AG04449 (cell line): ENCODE measurements at regions of chr7 and their contacts with region 1.

Region 1: DNA sequence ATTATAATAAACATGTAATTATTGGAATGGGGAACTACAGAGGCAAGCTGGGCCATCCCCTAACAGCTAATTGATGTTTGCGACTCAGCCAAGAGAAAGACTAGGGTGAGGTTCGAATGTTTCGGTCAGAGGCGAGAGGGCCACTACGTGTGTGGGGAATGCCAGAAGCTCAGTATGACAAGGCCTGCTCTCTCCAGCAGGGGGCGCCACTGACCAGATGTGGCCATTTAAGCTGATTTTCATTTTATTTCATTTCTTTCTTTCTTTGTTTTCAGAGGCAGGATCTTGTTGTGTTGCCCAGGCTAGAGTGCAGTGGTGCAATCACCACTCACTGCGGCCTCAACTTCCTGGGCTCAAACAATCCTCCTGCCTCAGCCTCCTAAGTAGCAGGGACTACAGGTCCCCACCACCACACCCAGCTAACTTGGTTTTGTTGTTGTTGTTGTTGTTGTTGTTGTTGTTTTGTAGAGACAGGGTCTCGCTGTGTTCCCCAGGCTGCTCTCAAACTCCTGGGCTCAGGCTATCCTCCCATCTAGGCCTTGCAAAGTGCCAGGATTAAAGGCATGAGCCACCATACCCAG is 38.1 kb downstream of the TMEM130 start:
- DNase-seq: no peak
- H3K4me3 ChIP-seq: no peak overlapping the region
- CTCF ChIP-seq: peak; percentile 70

Region 2: GRCh38 chr7:98821348-98821747 is 10.4 kb before region 1 on chr7:
- CTCF ChIA-PET with region 1: interaction called, 21 read pairs
- POLR2A ChIA-PET with region 1: no interaction called
- DNase-seq: no peak
- H3K4me3 ChIP-seq: no peak overlapping the region
- CTCF ChIP-seq: no peak

Region 3: DNA sequence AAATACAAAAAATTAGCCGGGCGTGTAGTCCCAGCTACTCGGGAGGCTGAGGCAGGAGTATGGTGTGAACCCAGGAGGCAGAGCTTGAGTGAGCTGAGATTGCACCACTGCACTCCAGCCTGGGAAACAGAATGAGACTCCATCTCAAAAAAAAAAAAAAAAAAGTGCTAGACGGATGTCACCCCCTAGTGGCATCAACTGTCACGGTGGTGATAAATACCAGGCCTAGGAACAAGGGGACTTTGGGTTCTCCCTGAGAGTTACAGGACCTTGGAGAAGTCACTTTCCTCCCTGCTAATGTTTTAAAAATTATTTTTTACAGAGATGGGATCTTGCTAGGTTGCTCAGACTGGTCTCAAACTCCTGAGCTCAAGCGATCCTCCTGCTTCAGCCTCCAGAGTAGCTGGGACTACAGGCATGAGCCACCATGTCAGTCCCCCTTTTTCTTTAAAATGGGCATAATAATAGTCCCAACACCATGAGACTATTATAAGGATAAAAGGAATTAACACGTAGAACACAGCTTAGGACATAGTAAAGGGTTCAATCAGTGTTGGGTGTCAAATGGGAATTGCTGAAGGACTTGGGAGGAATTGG is 40.7 kb after region 1 on chr7:
- CTCF ChIA-PET with region 1: interaction called, 30 read pairs
- POLR2A ChIA-PET with region 1: no interaction called
- DNase-seq: no peak
- H3K4me3 ChIP-seq: no peak overlapping the region
- CTCF ChIP-seq: peak; percentile 17